ENCODE measurements at regions of chr19 and their contacts with region 1.

Region 1: DNA sequence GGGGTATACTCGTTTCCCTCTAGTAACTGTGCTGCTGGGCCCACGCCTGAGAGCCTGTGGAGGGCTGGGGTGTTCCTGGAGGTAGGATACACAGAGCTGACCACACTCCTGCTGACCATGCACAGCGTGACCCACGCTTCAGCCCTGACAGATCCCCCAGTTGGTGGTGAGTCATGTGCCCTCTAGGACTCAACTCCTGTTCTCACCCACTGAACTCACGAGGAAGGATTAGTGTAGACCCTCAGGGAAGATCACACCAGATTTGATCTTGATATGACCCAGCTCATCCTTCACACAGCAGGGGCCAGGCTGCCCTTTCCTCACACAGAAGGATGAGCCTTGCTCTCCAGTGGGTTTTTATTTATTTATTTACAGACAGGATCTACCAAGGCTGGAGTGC is 13.3 kb upstream of the ACP7 start:
- DNase-seq: no peak
- ATAC-seq: peak; percentile 37
- H3K4me3 ChIP-seq: no peak overlapping the region
- H3K27ac ChIP-seq: peak overlapping the region; percentile 24
- H3K4me1 ChIP-seq: peaks cover 32% of the 10 kb centered on the region
- H3K27me3 ChIP-seq: no peaks in the 10 kb centered on the region
- CTCF ChIP-seq: no peak

Region 2: GRCh38 chr19:39805104-39805503 is 734.2 kb after region 1 on chr19:
- CTCF ChIA-PET with region 1: no interaction called
- POLR2A ChIA-PET with region 1: interaction called, 14 read pairs
- in situ Hi-C with region 1: no loop called
- intact Hi-C with region 1: no loop called
- DNase-seq: no peak
- ATAC-seq: no peak
- H3K4me3 ChIP-seq: no peak overlapping the region
- H3K27ac ChIP-seq: no peak overlapping the region
- H3K4me1 ChIP-seq: peaks cover 6% of the 10 kb centered on the region; the same call in 1 of the 2 replicates
- H3K27me3 ChIP-seq: peaks cover 29% of the 10 kb centered on the region
- CTCF ChIP-seq: no peak

Measured in Panc1 (cell line).